ENCODE measurements at regions of chr4 and their contacts with region 1.

Region 1: GRCh38 chr4:119212234-119212963 is at the start of gene USP53:
- DNase-seq: peak; percentile 98 to 99 (median 99)
- H3K4me3 ChIP-seq: peak within 1 kb of the TSS; percentile 90
- H3K27ac ChIP-seq: peak within 1 kb of the TSS; percentile 90 to 92
- H3K4me1 ChIP-seq: no peaks in the 10 kb centered on the region
- H3K27me3 ChIP-seq: no peaks in the 10 kb centered on the region
- CTCF ChIP-seq: peak in 1 of 3 donors; percentile 64
- EP300 ChIP-seq: peak; percentile 43
- POLR2A ChIP-seq: peak; percentile 87
- total RNA-seq, gene USP53: 19.6 to 98.9 (median 21.6) TPM

Region 2: DNA sequence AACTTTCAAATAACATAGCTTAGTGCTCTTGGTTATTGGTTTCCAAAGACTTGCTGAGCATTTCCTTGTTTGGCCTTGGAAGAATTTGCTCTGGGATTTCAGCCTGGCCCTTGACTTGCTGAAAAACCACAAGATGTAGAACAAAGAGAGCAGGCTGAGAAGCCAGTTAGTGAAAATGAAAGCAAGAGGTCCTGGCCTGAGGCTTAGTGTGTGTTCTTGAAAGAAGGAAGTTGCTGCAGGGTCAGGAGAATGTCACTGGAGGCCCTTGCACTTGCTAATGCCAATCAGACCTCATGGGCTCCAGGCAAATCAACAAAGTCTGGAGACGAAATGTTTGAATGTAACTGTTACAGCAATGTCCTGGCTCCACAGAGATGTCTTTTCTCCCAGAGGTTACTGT is 244.4 kb before region 1 on chr4:
- intact Hi-C with region 1: no loop called
- DNase-seq: peak; percentile 43 to 74 (median 61)
- H3K4me3 ChIP-seq: no peak overlapping the region
- H3K27ac ChIP-seq: peak overlapping the region in 1 of 2 donors; percentile 65
- H3K4me1 ChIP-seq: peaks cover 29% of the 10 kb centered on the region
- H3K27me3 ChIP-seq: no peaks in the 10 kb centered on the region
- CTCF ChIP-seq: no peak
- EP300 ChIP-seq: no peak
- POLR2A ChIP-seq: no peak

Region 3: GRCh38 chr4:118989098-118990080 is 223.0 kb before region 1 on chr4:
- intact Hi-C with region 1: loop called in 2 of 4 experiments (anchors 10 kb)
- DNase-seq: no peak
- H3K4me3 ChIP-seq: no peak overlapping the region
- H3K27ac ChIP-seq: no peak overlapping the region
- H3K4me1 ChIP-seq: peaks cover 18% of the 10 kb centered on the region
- H3K27me3 ChIP-seq: no peaks in the 10 kb centered on the region
- CTCF ChIP-seq: no peak
- EP300 ChIP-seq: no peak
- POLR2A ChIP-seq: no peak

Region 4: DNA sequence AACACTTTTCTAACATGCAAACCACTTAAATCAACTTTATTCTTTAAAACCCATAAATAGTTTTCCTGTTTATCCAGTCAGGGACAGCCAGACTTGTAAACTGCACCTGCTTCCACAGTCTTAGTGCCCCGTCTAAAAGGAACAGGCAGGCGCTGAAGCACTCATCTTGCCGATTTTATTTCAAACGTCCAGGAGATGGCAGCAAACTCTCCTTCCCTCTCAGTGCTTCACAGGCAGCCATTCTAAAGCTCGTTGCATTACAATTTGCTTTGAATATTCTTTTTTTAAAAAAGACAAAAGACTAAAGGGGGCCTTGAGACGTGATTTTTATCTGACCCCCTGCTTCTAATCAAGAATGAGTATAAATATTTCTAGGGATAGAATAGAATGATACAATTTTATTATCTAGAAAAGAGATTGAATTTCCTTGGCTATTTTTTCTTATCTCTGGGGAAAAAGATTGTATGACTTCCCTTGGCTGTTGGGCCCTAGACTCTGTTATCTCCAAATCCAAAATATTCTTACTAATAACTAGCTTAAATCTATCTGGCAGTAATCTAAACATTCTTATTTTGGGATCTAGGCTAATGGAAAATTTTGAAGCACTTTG is 170.3 kb before region 1 on chr4:
- intact Hi-C with region 1: loop called in 2 of 4 experiments (anchors 10 kb)
- DNase-seq: peak in 3 of 5 donors; percentile 29 to 72 (median 35)
- H3K4me3 ChIP-seq: no peak overlapping the region
- H3K27ac ChIP-seq: peak overlapping the region in 1 of 2 donors; percentile 63
- H3K4me1 ChIP-seq: peaks cover 15% of the 10 kb centered on the region
- H3K27me3 ChIP-seq: no peaks in the 10 kb centered on the region
- CTCF ChIP-seq: peak in 2 of 3 donors; percentile 53 to 57
- EP300 ChIP-seq: no peak
- POLR2A ChIP-seq: no peak

Region 5: GRCh38 chr4:119286377-119287002 is 74.1 kb after region 1 on chr4:
- intact Hi-C with region 1: loop called in 1 of 4 experiments (anchors 10 kb)
- DNase-seq: peak in 2 of 5 donors; percentile 35 to 51
- H3K4me3 ChIP-seq: no peak overlapping the region
- H3K27ac ChIP-seq: no peak overlapping the region
- H3K4me1 ChIP-seq: no peaks in the 10 kb centered on the region
- H3K27me3 ChIP-seq: no peaks in the 10 kb centered on the region
- CTCF ChIP-seq: peak; percentile 28 to 85 (median 70)
- EP300 ChIP-seq: no peak
- POLR2A ChIP-seq: no peak

Measured in ovary (tissue), 10 donors.